CD8-positive, alpha-beta T cell (primary cell): ENCODE measurements at regions of chr6 and their contacts with region 1.

Region 1: GRCh38 chr6:7145885-7146828 is 38.4 kb downstream of the RREB1 start:
- DNase-seq: peak in 2 of 9 experiments; percentile 26 to 40
- ATAC-seq: peak; percentile 68
- H3K4me3 ChIP-seq: no peak overlapping the region
- H3K4me3 Mint-ChIP-seq: peak overlapping the region; percentile 70
- H3K27ac ChIP-seq: no peak overlapping the region
- H3K27ac Mint-ChIP-seq: peak overlapping the region; percentile 88
- H3K4me1 ChIP-seq: peaks cover 37% of the 10 kb centered on the region
- H3K4me1 Mint-ChIP-seq: peaks cover 71% of the 10 kb centered on the region
- H3K27me3 ChIP-seq: no peaks in the 10 kb centered on the region
- H3K27me3 Mint-ChIP-seq: no peaks in the 10 kb centered on the region
- CTCF ChIP-seq: no peak

Region 2: DNA sequence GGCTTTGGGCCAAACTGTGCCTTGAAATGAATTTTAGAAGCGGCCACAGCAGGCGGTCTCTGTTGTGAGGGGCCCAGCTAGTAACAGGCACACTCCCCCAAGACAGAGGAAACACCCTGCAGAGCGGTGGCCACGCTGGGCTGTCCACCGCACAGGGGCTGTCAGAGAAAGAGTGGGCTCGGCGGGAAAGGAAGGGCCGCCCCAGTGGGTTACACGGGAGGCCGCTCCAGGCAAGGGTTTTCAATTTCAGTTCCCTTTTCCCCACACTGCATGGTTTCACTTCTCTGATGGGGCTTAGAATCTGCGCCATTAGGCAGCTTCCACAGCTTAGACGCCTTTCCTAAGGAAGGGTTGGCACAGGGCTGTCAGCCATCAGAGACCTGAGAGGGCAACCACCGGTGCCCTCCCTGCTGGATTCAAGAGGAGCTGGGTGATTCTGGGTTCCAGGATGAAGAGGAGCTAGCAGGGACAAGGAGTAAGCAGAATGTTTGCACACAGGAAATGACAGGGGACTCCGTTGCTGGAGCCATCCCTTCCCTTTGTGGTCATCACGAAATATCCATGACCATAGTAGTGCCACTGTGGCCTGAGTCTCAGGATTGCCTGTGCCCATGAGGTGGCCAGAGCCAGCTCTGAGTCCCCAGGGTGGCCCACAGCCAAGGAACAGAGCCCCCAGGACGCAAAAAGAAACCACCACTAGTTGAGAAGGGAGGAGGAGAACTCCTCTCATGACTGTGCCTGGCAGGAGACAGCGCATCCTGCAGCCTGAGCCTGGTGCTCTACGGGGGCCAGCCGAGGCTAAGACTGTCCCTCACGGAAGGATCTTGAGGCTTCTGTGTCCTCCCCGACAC is 1422.1 kb before region 1 on chr6:
- CTCF ChIA-PET with region 1: no interaction called
- POLR2A ChIA-PET with region 1: no interaction called
- intact Hi-C with region 1: no loop called
- DNase-seq: peak in 1 of 9 experiments; percentile 34
- ATAC-seq: peak; percentile 51
- H3K4me3 ChIP-seq: peak overlapping the region in 1 of 2 experiments; percentile 31
- H3K4me3 Mint-ChIP-seq: peak overlapping the region; percentile 81
- H3K27ac ChIP-seq: peak overlapping the region in 1 of 2 experiments; percentile 25
- H3K27ac Mint-ChIP-seq: peak overlapping the region; percentile 91
- H3K4me1 ChIP-seq: no peaks in the 10 kb centered on the region
- H3K4me1 Mint-ChIP-seq: peaks cover 35% of the 10 kb centered on the region
- H3K27me3 ChIP-seq: no peaks in the 10 kb centered on the region
- H3K27me3 Mint-ChIP-seq: no peaks in the 10 kb centered on the region
- CTCF ChIP-seq: no peak

Region 3: DNA sequence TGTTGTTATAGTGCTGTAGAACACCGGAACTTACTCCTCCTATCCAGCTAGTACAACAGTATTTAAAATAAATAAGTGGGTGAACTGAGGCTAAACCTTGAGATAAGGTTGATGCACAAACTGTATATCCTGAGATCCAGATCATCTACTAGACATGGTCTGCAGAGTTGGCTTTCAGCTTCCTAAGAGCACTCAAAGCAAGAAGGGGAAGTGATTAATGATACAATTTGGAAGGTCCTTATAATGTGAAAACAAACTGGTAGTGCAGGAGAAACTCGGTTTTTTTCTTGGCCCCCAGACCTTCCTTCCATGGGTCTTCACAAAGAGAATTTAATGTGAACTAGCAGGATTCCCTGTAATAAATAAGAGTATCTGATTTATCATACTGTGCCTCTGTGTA is 65.8 kb before region 1 on chr6:
- CTCF ChIA-PET with region 1: no interaction called
- POLR2A ChIA-PET with region 1: no interaction called
- intact Hi-C with region 1: no loop called
- DNase-seq: no peak
- ATAC-seq: no peak
- H3K4me3 ChIP-seq: no peak overlapping the region
- H3K4me3 Mint-ChIP-seq: no peak overlapping the region
- H3K27ac ChIP-seq: no peak overlapping the region
- H3K27ac Mint-ChIP-seq: no peak overlapping the region
- H3K4me1 ChIP-seq: peaks cover 4% of the 10 kb centered on the region
- H3K4me1 Mint-ChIP-seq: peaks cover 6% of the 10 kb centered on the region
- H3K27me3 ChIP-seq: no peaks in the 10 kb centered on the region
- H3K27me3 Mint-ChIP-seq: no peaks in the 10 kb centered on the region
- CTCF ChIP-seq: no peak

Region 4: DNA sequence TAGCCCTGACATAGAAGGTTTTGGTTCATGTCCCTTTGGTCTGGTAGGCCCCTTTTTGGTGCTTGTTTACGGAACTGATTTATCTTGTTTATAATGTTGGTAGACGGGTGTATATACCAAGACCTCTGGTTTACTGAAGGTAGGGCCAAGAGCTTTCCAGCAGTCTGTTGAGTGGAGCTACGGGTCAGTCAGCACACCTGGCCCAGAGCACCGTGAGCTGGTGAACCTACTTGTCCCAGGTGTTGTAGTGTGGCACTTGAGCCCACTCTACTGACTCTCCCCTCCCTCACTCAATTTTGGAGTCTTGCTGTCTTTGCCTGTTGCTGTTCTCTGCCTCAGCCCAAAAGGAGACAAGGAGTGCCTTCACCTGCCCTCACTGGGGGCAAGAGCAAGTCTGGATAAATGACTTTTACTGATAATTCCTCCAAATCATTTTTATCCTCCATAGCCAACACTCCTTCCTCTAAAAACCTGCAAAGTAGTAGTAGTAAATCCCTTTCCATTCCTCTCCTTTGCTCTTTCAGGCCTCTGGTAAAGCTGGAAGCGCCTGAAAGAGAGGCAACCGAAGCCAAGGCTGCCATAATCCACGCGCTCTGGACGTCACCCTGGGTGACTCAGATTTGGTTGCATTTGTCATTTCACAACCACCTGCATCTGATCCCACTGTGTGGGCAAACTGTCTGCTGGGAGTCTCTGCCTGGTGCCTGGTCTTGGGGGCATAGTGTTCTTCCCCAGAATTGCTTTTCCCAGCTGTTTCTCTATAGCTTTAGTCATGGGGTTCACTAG is 16.2 kb before region 1 on chr6:
- CTCF ChIA-PET with region 1: interaction called, 6 read pairs
- POLR2A ChIA-PET with region 1: interaction called, 3 read pairs
- intact Hi-C with region 1: loop called in 1 of 2 experiments (anchors 2 kb)
- DNase-seq: peak in 1 of 9 experiments; percentile 35
- ATAC-seq: no peak
- H3K4me3 ChIP-seq: no peak overlapping the region
- H3K4me3 Mint-ChIP-seq: no peak overlapping the region
- H3K27ac ChIP-seq: no peak overlapping the region
- H3K27ac Mint-ChIP-seq: peak overlapping the region; percentile 74
- H3K4me1 ChIP-seq: peaks cover 48% of the 10 kb centered on the region
- H3K4me1 Mint-ChIP-seq: peaks cover 82% of the 10 kb centered on the region
- H3K27me3 ChIP-seq: no peaks in the 10 kb centered on the region
- H3K27me3 Mint-ChIP-seq: no peaks in the 10 kb centered on the region
- CTCF ChIP-seq: no peak

Region 5: GRCh38 chr6:7163661-7164071 is 17.5 kb after region 1 on chr6:
- CTCF ChIA-PET with region 1: no interaction called
- POLR2A ChIA-PET with region 1: no interaction called
- intact Hi-C with region 1: loop called in 1 of 2 experiments (anchors 2 kb)
- DNase-seq: no peak
- ATAC-seq: no peak
- H3K4me3 ChIP-seq: no peak overlapping the region
- H3K4me3 Mint-ChIP-seq: no peak overlapping the region
- H3K27ac ChIP-seq: no peak overlapping the region
- H3K27ac Mint-ChIP-seq: no peak overlapping the region
- H3K4me1 ChIP-seq: peaks cover 17% of the 10 kb centered on the region
- H3K4me1 Mint-ChIP-seq: peaks cover 63% of the 10 kb centered on the region
- H3K27me3 ChIP-seq: no peaks in the 10 kb centered on the region
- H3K27me3 Mint-ChIP-seq: no peaks in the 10 kb centered on the region
- CTCF ChIP-seq: no peak